A673 (cell line): ENCODE measurements at regions of chrX and their contacts with region 1.

Region 1: DNA sequence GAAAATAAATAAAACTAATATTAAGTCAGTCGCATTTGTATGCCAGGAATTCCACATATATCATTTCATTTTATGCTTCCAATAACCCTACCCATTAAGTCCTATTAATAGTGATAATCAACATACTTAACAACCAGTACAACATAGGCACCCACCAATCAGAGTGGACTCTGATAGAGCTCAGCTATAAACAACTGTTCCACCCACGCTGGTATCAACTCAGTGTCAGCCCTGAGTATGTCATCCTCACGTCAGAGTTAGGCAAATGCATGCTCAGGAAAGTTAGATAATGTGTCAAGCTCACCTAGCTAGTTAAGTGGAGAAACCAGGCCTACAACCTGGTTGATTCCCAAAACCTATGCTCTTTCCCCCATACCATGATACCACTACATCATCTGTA is 89.3 kb downstream of the SMARCA1 start:
- DNase-seq: no peak
- H3K4me3 ChIP-seq: no peak overlapping the region
- H3K27ac ChIP-seq: no peak overlapping the region
- H3K4me1 ChIP-seq: no peaks in the 10 kb centered on the region
- H3K27me3 ChIP-seq: no peaks in the 10 kb centered on the region
- CTCF ChIP-seq: no peak

Region 2: GRCh38 chrX:130120746-130121504 is 687.0 kb after region 1 on chrX:
- CTCF ChIA-PET with region 1: interaction called, 10 read pairs
- POLR2A ChIA-PET with region 1: no interaction called
- intact Hi-C with region 1: no loop called
- DNase-seq: peak; percentile 80
- H3K4me3 ChIP-seq: peak overlapping the region; percentile 42
- H3K27ac ChIP-seq: peak overlapping the region; percentile 65
- H3K4me1 ChIP-seq: no peaks in the 10 kb centered on the region
- H3K27me3 ChIP-seq: no peaks in the 10 kb centered on the region
- CTCF ChIP-seq: peak; percentile 79